Prostate gland (tissue), 2 donors: ENCODE measurements at regions of chr1 and their contacts with region 1.

Region 1: DNA sequence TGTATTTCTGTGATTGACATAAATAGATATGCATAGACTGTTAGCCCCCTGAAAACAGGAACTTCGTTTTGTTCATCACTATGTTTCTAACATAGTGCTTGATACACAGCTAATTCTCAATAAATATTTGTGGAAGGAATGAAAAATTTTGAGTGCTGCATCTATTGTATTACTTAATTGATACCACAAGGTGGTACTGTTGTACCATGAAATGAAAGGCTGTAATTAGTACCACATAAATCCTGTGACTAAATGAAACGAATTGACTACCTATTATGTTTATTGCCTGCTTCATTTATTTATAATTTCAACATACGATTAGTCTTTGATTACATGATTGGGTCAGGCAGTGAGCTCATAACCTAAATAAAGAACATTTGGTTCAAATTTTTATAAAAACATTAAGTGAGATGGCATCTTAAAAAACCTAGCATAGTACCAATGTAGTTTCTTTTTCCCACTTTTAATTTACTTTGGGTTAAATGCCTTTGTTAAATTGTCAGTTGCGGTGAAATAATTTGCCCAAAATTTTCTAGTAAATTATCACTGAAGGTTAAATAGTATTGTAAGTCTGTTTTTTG is 15.0 kb upstream of the TGFB2 start:
- DNase-seq: no peak
- H3K4me3 ChIP-seq: no peak overlapping the region
- H3K27ac ChIP-seq: no peak overlapping the region
- H3K4me1 ChIP-seq: no peaks in the 10 kb centered on the region
- H3K27me3 ChIP-seq: no peaks in the 10 kb centered on the region
- CTCF ChIP-seq: peak; percentile 31 to 84 (median 76)
- POLR2A ChIP-seq: no peak

Region 2: DNA sequence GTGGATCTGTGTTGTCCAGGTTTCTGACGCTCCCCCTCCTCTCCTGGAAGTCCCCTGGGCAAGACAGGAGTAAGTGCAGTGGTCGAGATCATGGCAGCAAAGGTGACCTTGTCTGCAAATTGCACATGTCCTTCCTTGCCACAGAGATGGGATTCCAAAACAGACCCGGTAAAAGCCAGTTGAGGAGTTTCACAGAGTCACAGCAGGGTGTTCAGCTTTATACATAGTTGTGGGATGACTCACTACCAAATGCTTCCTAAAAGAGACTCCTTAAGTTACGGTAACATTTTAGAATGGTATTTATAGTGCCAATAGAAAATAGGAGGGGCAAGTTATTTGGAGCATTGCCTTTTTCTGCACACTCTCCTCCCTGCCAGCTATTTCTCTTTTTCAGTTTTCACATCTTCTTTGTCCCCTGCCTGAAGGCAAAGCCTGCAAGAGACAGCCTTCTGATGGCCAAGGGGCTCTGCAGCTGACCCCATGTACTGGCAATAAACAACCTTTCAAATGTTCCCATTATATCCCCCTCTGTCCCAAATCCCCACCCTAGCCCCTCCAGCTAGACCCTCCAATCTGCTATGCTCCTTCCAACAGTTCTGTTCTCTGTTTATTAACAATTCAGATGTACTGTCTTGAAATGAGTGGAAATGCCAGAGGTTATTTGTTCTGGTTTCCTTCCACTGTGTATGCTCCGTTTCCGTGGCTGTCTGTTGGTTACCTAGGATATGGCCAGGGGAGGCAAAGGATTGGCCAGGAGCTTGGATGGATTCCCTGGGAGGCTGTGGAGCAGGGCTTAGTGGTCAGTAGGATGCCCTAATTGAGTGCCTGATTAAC is 130.0 kb after region 1 on chr1:
- intact Hi-C with region 1: no loop called
- DNase-seq: peak; percentile 36
- H3K4me3 ChIP-seq: no peak overlapping the region
- H3K27ac ChIP-seq: peak overlapping the region; percentile 61 to 62
- H3K4me1 ChIP-seq: no peaks in the 10 kb centered on the region
- H3K27me3 ChIP-seq: no peaks in the 10 kb centered on the region
- CTCF ChIP-seq: no peak
- POLR2A ChIP-seq: no peak

Region 3: GRCh38 chr1:218624050-218624449 is 293.9 kb after region 1 on chr1:
- intact Hi-C with region 1: no loop called
- DNase-seq: no peak
- H3K4me3 ChIP-seq: no peak overlapping the region
- H3K27ac ChIP-seq: no peak overlapping the region
- H3K4me1 ChIP-seq: no peaks in the 10 kb centered on the region
- H3K27me3 ChIP-seq: no peaks in the 10 kb centered on the region
- CTCF ChIP-seq: no peak
- POLR2A ChIP-seq: no peak

Region 4: GRCh38 chr1:219130366-219130935 is 800.3 kb after region 1 on chr1:
- intact Hi-C with region 1: no loop called
- DNase-seq: no peak
- H3K4me3 ChIP-seq: no peak overlapping the region
- H3K27ac ChIP-seq: no peak overlapping the region
- H3K4me1 ChIP-seq: no peaks in the 10 kb centered on the region
- H3K27me3 ChIP-seq: no peaks in the 10 kb centered on the region
- CTCF ChIP-seq: no peak
- POLR2A ChIP-seq: no peak

Region 5: GRCh38 chr1:219812491-219813203 is 1482.5 kb after region 1 on chr1:
- intact Hi-C with region 1: loop called (anchors 5 kb)
- DNase-seq: peak; percentile 13
- H3K4me3 ChIP-seq: no peak overlapping the region
- H3K27ac ChIP-seq: no peak overlapping the region
- H3K4me1 ChIP-seq: no peaks in the 10 kb centered on the region
- H3K27me3 ChIP-seq: no peaks in the 10 kb centered on the region
- CTCF ChIP-seq: peak; percentile 42 to 80 (median 68)
- POLR2A ChIP-seq: no peak